Activated CD8-positive, alpha-beta T cell treated with anti-CD3 and anti-CD28 coated beads for 36 hours (primary cell): ENCODE measurements at regions of chr2 and their contacts with region 1.

Region 1: GRCh38 chr2:7567646-7568045 is 650.4 kb downstream of the RNF144A start:
- DNase-seq: peak; percentile 89
- ATAC-seq: peak; percentile 95
- H3K4me3 Mint-ChIP-seq: peak overlapping the region; percentile 39
- H3K27ac Mint-ChIP-seq: peak overlapping the region; percentile 92
- H3K4me1 Mint-ChIP-seq: peaks cover 72% of the 10 kb centered on the region
- H3K27me3 Mint-ChIP-seq: no peaks in the 10 kb centered on the region
- CTCF ChIP-seq: peak; percentile 30

Region 2: GRCh38 chr2:7437716-7438632 is 129.7 kb before region 1 on chr2:
- CTCF ChIA-PET with region 1: interaction called, 15 read pairs
- POLR2A ChIA-PET with region 1: interaction called, 3 read pairs
- intact Hi-C with region 1: no loop called
- DNase-seq: peak; percentile 77
- ATAC-seq: peak; percentile 44
- H3K4me3 Mint-ChIP-seq: peak overlapping the region; percentile 15
- H3K27ac Mint-ChIP-seq: peak overlapping the region; percentile 93
- H3K4me1 Mint-ChIP-seq: peaks cover 88% of the 10 kb centered on the region
- H3K27me3 Mint-ChIP-seq: no peaks in the 10 kb centered on the region
- CTCF ChIP-seq: no peak

Region 3: GRCh38 chr2:7523481-7524120 is 44.0 kb before region 1 on chr2:
- CTCF ChIA-PET with region 1: interaction called, 4 read pairs
- POLR2A ChIA-PET with region 1: interaction called, 10 read pairs
- intact Hi-C with region 1: loop called (anchors 5 kb)
- DNase-seq: peak; percentile 32
- ATAC-seq: peak; percentile 54
- H3K4me3 Mint-ChIP-seq: peak overlapping the region; percentile 48
- H3K27ac Mint-ChIP-seq: peak overlapping the region; percentile 87
- H3K4me1 Mint-ChIP-seq: peaks cover 72% of the 10 kb centered on the region
- H3K27me3 Mint-ChIP-seq: no peaks in the 10 kb centered on the region
- CTCF ChIP-seq: no peak

Region 4: GRCh38 chr2:7577769-7578168 is 10.1 kb after region 1 on chr2:
- CTCF ChIA-PET with region 1: interaction called, 10 read pairs
- POLR2A ChIA-PET with region 1: interaction called, 3 read pairs
- intact Hi-C with region 1: no loop called
- DNase-seq: no peak
- ATAC-seq: peak; percentile 67
- H3K4me3 Mint-ChIP-seq: no peak overlapping the region
- H3K27ac Mint-ChIP-seq: no peak overlapping the region
- H3K4me1 Mint-ChIP-seq: peaks cover 17% of the 10 kb centered on the region
- H3K27me3 Mint-ChIP-seq: no peaks in the 10 kb centered on the region
- CTCF ChIP-seq: no peak

Region 5: GRCh38 chr2:7672027-7672684 is 104.5 kb after region 1 on chr2:
- CTCF ChIA-PET with region 1: interaction called, 22 read pairs
- POLR2A ChIA-PET with region 1: interaction called, 4 read pairs
- intact Hi-C with region 1: loop called (anchors 5 kb)
- DNase-seq: peak; percentile 85
- ATAC-seq: peak; percentile 84
- H3K4me3 Mint-ChIP-seq: peak overlapping the region; percentile 50
- H3K27ac Mint-ChIP-seq: peak overlapping the region; percentile 95
- H3K4me1 Mint-ChIP-seq: peaks cover 62% of the 10 kb centered on the region
- H3K27me3 Mint-ChIP-seq: no peaks in the 10 kb centered on the region
- CTCF ChIP-seq: peak; percentile 98